ENCODE measurements at regions of chr14 and their contacts with region 1.

Region 1: DNA sequence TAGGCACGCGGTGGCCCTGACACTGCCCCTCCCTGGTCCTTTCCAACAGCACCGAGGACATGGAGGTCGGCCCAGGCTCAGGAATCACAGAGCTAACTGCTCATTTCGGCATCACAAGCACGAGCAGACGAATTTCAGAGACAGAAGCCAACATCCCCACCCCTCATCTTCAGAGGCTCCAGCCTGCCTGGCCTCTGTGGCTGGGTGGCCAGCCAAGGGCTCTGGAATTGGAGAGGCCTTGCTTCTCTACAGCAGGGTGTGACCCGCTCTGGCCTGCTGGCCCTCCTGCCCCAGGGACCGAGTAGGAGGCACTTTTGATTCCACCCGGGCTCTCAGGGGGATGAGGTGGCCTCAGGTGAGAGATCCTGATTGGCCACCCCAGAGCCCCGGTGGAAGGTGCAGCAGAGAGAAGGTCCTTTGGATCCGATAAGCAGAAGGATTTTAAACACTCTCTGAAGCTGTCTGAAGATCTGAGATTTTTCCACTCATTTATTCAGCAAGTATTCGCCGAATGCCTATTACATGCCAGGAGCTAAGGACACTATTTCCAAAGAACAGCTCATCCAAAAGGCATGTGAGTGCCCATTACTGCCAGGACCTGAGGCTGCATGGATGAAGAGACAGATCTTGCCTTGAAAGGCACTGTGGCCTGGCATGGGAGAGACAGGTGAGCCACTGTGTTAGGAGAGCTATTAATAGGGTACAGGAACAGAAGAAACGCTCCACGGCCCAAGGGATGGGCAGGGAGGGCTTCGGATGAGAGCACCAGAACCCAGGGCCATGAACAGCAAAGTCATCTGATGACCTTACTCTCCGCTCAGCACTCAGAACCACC is 10.2 kb downstream of the BAG5 start:
- DNase-seq: no peak
- H3K4me3 ChIP-seq: no peak overlapping the region
- H3K27ac ChIP-seq: peak overlapping the region; percentile 64 to 77; a peak in 3 of 4 replicates
- H3K4me1 ChIP-seq: peaks cover 2 to 19% of the 10 kb centered on the region in 2 experiments; a peak in 3 of 4 replicates
- H3K27me3 ChIP-seq: no peaks in the 10 kb centered on the region
- CTCF ChIP-seq: no peak
- EP300 ChIP-seq: no peak
- RAD21 ChIP-seq: no peak

Region 2: DNA sequence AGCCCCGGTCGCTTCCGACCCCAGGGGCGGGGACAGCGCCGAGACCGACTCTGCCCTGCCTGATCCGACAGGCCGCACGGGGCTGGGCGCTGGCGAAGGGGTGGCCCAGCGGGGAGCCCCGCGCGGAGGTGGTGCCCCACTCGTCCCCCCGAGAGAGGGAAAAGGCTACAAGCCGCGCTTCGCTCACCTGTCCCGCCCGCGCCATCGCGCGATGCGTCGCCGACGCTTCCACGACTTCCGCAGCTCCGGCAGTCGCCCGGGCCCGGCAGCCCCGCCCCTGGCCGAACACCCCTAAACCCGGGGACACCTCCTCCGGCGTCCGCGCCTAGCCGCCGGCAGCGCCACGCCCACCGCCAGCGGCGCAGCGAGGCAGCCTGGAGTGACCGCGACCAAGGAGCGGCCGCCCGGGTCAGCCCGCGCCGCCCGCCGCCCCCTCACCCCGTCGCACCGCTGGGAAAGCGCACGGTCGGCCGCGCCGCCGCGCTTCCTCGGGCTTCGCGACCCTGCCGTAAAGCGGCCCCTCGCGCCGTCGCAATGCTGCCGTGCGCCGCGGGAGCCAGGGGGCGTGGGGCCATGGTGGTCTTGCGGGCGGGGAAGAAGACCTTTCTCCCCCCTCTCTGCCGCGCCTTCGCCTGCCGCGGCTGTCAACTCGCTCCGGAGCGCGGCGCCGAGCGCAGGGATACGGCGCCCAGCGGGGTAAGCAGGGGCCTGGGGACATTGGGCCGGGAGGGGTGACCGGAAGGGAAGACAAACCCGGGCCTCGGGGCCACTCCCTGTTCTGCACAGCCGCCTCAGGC is 10.4 kb after region 1 on chr14 and contains the starts of genes BAG5 and COA8:
- CTCF ChIA-PET with region 1: interaction called, 37 read pairs
- POLR2A ChIA-PET with region 1: interaction called, 4 read pairs
- DNase-seq: peak; percentile 96
- H3K4me3 ChIP-seq: peak within 1 kb of the TSS; percentile 91 to 92
- H3K27ac ChIP-seq: peak within 1 kb of the TSS; percentile 92
- H3K4me1 ChIP-seq: peaks cover 16 to 19% of the 10 kb centered on the region in 2 experiments; a peak in 3 of 4 replicates
- H3K27me3 ChIP-seq: no peaks in the 10 kb centered on the region
- CTCF ChIP-seq: 0 out of 2 replicates have a peak, but pooled peaks have one; percentile 6
- EP300 ChIP-seq: no peak
- RAD21 ChIP-seq: no peak
- polyA plus RNA-seq, gene BAG5: 5.2 and 5.9 TPM in 2 replicates
- polyA plus RNA-seq, gene COA8: 25.2 and 25.4 TPM in 2 replicates

Region 3: DNA sequence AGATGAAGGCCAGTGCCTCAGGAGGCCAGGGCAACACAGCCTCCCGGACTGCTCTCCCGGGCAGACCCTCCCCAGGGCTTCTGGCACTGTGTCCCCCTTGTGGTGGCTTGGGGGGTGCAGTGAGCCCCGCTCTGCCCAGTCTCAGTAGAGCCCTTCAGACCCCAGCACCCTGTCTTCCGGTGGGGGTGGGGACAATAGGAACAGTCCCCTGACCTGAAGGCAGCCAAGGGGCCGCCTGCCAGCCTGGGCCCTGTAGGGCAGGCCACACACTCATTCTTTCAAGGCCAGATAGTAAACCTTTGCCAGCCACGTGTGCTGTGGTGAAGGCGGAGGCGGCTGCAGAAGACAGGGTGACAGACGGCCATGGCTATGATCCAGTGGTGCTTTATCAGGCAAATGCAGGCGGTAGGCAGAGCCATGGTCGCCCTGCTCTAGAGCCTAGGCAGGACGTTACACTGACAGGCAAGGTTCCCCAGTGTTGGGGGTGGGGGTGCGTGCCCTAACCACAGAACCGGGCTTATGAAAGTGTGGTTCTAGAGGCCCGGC is 178.3 kb after region 1 on chr14:
- CTCF ChIA-PET with region 1: no interaction called
- POLR2A ChIA-PET with region 1: no interaction called
- DNase-seq: peak; percentile 58
- H3K4me3 ChIP-seq: no peak overlapping the region
- H3K27ac ChIP-seq: no peak overlapping the region
- H3K4me1 ChIP-seq: no peaks in the 10 kb centered on the region
- H3K27me3 ChIP-seq: no peaks in the 10 kb centered on the region
- CTCF ChIP-seq: 0 out of 2 replicates have a peak, but pooled peaks have one; percentile 22
- EP300 ChIP-seq: no peak
- RAD21 ChIP-seq: no peak

Measured in SK-N-SH (cell line).